AG04449 (cell line): ENCODE measurements at regions of chr1 and their contacts with region 1.

Region 1: GRCh38 chr1:183655562-183656075 is 2.5 kb upstream of the APOBEC4 start:
- DNase-seq: no peak
- H3K4me3 ChIP-seq: no peak overlapping the region
- CTCF ChIP-seq: peak; percentile 78

Region 2: GRCh38 chr1:183622013-183622412 is 33.6 kb before region 1 on chr1:
- CTCF ChIA-PET with region 1: no interaction called
- POLR2A ChIA-PET with region 1: no interaction called
- DNase-seq: no peak
- H3K4me3 ChIP-seq: no peak overlapping the region
- CTCF ChIP-seq: no peak

Region 3: GRCh38 chr1:183670178-183670577 is 14.6 kb after region 1 on chr1:
- CTCF ChIA-PET with region 1: interaction called, 58 read pairs
- POLR2A ChIA-PET with region 1: no interaction called
- DNase-seq: no peak
- H3K4me3 ChIP-seq: no peak overlapping the region
- CTCF ChIP-seq: no peak

Region 4: DNA sequence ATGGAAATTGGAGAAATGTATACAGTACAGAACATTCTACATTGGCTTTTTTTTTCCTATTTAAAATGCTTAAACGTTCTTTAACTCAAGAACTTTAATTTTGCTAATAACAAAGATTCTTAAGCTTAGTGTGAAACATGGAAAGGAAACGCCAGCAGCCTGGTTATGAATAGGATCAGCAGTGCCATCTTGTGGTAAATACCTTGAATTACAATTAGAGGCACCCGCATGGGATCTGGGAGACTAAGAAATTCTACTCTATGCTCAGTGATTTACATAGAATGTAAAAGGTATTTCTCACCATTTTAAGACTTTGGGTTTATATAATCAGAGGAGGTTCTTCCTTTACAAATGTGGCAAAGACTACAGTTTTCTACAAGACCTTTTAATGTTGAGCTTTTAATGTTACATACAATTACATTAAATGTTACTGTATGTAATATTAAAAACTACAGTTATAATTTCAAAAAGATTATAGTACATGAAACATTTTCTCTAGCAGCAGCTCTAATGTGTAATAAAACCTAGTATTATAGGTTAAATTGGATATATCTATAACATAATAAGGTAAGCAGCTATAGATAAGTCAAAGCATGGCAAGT is 29.6 kb after region 1 on chr1:
- CTCF ChIA-PET with region 1: interaction called, 112 read pairs
- POLR2A ChIA-PET with region 1: no interaction called
- DNase-seq: no peak
- H3K4me3 ChIP-seq: no peak overlapping the region
- CTCF ChIP-seq: peak; percentile 38

Region 5: GRCh38 chr1:183932412-183932811 is 276.8 kb after region 1 on chr1:
- CTCF ChIA-PET with region 1: interaction called, 11 read pairs
- POLR2A ChIA-PET with region 1: no interaction called
- DNase-seq: no peak
- H3K4me3 ChIP-seq: no peak overlapping the region
- CTCF ChIP-seq: no peak